Activated T-helper 1 cell treated with anti-CD3 and anti-CD28 coated beads, Interleukin-12 subunit alpha, Interleukin-12 subunit beta, Interleukin-2, Interleukin-4 antibody, amounts not matched to agents 30 ng/mL and 10 ng/mL and 1 ng/mL, durations not matched to agents 14 hours and 24 hours and 36 hours (primary cell): ENCODE measurements at regions of chr16 and their contacts with region 1.

Region 1: GRCh38 chr16:12504312-12504711 is 299.4 kb downstream of the CPPED1 start:
- DNase-seq: no peak
- H3K4me3 Mint-ChIP-seq: no peak overlapping the region
- H3K27ac Mint-ChIP-seq: no peak overlapping the region
- H3K4me1 Mint-ChIP-seq: peaks cover 12% of the 10 kb centered on the region
- H3K27me3 Mint-ChIP-seq: no peaks in the 10 kb centered on the region

Region 2: DNA sequence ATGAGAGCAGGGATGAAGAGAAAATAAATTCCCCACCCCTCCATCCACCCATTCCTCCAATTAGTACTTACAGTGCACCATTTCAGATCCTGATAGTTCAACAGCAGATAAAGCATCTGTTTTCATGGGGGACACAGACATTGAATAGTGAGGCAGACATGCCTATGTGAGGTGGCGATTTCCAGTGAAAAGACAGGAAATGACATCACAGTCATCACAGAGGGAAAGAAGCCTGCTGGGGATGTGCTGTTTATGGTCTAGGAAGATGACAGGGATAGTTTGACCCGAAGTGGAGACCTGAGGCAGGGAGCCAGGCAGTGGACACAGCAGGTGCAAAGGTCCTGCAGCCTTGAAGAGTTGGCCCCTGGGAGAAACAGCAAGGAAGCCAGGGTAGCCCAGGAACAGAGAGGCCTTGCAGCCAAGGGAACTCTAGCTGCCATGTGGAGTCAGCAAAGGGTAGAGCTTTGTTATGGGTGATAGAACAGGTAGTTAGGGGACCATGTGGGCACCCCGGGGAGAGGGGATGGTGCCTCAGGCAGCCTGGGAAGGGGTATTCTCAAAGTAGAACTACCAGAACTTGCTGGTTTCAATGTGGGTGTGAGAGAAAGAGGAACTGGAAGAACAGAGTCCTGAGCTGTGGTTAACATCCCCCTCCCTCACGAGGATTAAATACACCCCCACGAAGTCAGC is 42.8 kb after region 1 on chr16:
- intact Hi-C with region 1: loop called (anchors 2 kb)
- DNase-seq: no peak
- H3K4me3 Mint-ChIP-seq: peak overlapping the region; percentile 70
- H3K27ac Mint-ChIP-seq: peak overlapping the region; percentile 85
- H3K4me1 Mint-ChIP-seq: peaks cover 96% of the 10 kb centered on the region
- H3K27me3 Mint-ChIP-seq: no peaks in the 10 kb centered on the region